Dendritic cell treated with granulocyte-macrophage colony-stimulating factor and Interleukin-4, amounts not matched to agents 40 ng/mL and 50 ng/mL, for 4 days (primary cell): ENCODE measurements at regions of chr5 and their contacts with region 1.

Region 1: GRCh38 chr5:95822542-95823181 is at the start of gene GLRX:
- H3K4me3 Mint-ChIP-seq: peak within 1 kb of the TSS; percentile 95
- H3K27ac Mint-ChIP-seq: peak within 1 kb of the TSS; percentile 92
- H3K4me1 Mint-ChIP-seq: peaks cover 77% of the 10 kb centered on the region
- H3K27me3 Mint-ChIP-seq: no peaks in the 10 kb centered on the region

Region 2: GRCh38 chr5:95655575-95655974 is 167.1 kb before region 1 on chr5:
- intact Hi-C with region 1: no loop called
- H3K4me3 Mint-ChIP-seq: no peak overlapping the region
- H3K27ac Mint-ChIP-seq: no peak overlapping the region
- H3K4me1 Mint-ChIP-seq: no peaks in the 10 kb centered on the region
- H3K27me3 Mint-ChIP-seq: no peaks in the 10 kb centered on the region

Region 3: DNA sequence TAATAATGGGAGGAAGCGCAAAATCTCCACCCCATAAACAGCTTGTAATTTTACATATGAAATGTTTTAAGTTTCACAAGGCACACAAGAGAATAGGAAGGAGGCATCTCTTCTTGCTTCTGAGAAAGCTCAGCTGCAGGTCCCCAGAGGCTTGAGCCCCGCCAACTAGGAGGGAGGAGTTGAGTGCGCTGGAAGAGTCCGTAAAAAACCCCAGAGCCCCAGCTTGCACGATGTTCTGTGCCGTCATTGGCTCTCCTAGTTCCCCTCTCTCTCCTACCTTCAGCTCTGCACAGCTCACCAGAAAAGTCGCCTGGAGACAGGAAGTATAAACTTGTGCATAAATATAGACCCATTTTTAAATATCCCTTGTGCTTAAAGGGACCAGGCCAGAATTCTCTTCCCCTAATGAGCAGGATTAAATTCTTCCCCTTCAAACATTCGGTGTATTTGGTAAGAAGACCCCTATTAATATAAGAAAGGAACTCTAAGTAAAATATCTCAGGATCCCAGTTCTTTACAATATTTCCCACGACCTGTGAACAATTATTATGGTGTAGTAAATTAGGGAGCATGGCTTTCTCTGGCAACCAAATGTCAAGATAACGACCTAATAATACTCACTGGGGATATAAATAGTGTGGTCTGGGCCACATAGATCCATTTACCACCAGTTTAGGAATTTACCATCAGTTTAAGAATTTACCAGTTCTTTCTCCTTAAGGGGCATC is 13.8 kb before region 1 on chr5:
- intact Hi-C with region 1: loop called (anchors 2 kb)
- H3K4me3 Mint-ChIP-seq: peak overlapping the region; percentile 39
- H3K27ac Mint-ChIP-seq: peak overlapping the region; percentile 74
- H3K4me1 Mint-ChIP-seq: peaks cover 57% of the 10 kb centered on the region
- H3K27me3 Mint-ChIP-seq: no peaks in the 10 kb centered on the region

Region 4: GRCh38 chr5:95832664-95833063 is 10.0 kb after region 1 on chr5:
- intact Hi-C with region 1: loop called (anchors 1 kb)
- H3K4me3 Mint-ChIP-seq: no peak overlapping the region
- H3K27ac Mint-ChIP-seq: peak overlapping the region; percentile 28
- H3K4me1 Mint-ChIP-seq: peaks cover 55% of the 10 kb centered on the region
- H3K27me3 Mint-ChIP-seq: no peaks in the 10 kb centered on the region